Endothelial cell of umbilical vein (primary cell): ENCODE measurements at regions of chr1 and their contacts with region 1.

Region 1: DNA sequence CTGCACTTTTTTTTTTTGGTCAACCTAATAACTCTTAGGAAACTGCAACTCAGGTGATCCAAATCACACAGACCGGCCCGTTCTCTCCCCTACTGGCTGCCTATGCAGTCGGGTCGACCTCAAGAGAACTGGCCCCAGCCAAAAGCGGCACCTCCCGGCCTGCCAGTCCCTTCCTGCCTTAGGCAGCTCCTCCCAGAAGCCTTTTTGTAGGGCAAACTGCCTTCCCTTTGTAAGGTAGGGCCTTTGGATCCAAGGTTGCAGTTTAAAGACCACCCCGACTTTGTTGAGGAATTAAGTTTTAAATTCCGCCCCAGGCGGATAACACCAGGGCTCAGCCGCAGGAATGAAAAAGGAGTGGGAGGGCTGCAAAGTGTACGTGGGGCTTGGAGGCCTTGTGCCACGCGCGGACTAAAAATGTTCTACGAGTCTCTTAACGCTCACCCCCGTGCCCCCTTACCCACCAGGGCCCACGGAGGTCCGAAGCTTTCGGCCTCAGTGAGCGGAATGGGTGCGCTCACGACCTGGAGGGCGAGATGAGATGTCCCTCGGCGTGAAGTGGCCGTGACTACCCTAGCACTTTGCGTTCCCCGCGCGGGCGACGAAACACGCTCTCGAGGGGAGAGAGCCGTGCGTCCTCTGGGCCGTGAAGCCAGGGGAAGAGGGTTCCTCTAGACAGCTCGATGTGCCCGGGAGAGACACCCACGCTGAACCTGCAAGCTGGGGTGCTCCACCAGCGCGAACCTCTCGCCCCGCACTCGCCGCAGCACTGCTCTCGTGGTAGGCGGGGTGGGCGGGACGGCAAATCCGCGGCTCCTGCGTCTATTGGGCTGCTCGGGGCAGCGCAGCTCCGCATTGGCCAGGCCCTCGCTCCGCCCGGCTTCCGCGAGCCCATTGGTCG is 489 bp upstream of the ST3GAL3 start:
- DNase-seq: peak; percentile 92
- H3K4me3 ChIP-seq: peak overlapping the region in 2 of 3 experiments; percentile 36 to 56
- H3K27ac ChIP-seq: no peak overlapping the region
- H3K4me1 ChIP-seq: peaks cover 36% of the 10 kb centered on the region
- H3K27me3 ChIP-seq: no peaks in the 10 kb centered on the region
- CTCF ChIP-seq: no peak
- POLR2A ChIP-seq: peak; percentile 93

Region 2: DNA sequence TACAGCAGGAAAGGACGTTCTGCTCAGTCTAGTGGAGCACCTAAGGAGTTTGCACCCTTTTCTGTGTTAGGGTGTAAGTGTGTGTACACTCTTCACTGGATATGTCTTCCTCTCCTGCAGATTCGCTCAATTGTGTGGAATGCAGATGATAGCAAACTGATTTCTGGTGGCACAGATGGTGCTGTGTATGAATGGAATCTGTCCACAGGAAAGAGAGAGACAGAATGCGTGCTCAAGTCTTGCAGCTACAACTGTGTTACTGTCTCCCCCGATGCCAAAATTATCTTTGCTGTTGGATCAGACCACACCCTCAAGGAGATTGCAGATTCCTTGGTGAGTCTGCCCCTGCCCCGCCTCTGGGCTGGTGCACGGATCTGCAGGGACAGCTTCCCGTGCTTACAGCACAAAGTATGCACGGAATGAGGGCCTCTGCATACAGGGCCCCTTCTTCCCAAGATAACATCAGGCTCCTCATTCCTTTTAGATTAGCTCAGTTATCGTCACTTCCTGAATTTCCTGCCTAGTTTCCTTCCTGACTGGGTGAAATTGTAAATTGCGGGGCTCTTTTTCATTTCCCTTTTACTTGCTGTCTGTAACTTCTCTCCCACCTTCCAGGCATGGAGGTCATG is 500.1 kb before region 1 on chr1:
- CTCF ChIA-PET with region 1: no interaction called
- POLR2A ChIA-PET with region 1: no interaction called
- dilution Hi-C with region 1: no loop called
- intact Hi-C with region 1: loop called (anchors 1 kb)
- DNase-seq: no peak
- H3K4me3 ChIP-seq: peak overlapping the region in 1 of 3 experiments; percentile 7
- H3K27ac ChIP-seq: peak overlapping the region; percentile 97
- H3K4me1 ChIP-seq: peaks cover 27% of the 10 kb centered on the region
- H3K27me3 ChIP-seq: no peaks in the 10 kb centered on the region
- CTCF ChIP-seq: no peak
- POLR2A ChIP-seq: peak; percentile 92

Region 3: DNA sequence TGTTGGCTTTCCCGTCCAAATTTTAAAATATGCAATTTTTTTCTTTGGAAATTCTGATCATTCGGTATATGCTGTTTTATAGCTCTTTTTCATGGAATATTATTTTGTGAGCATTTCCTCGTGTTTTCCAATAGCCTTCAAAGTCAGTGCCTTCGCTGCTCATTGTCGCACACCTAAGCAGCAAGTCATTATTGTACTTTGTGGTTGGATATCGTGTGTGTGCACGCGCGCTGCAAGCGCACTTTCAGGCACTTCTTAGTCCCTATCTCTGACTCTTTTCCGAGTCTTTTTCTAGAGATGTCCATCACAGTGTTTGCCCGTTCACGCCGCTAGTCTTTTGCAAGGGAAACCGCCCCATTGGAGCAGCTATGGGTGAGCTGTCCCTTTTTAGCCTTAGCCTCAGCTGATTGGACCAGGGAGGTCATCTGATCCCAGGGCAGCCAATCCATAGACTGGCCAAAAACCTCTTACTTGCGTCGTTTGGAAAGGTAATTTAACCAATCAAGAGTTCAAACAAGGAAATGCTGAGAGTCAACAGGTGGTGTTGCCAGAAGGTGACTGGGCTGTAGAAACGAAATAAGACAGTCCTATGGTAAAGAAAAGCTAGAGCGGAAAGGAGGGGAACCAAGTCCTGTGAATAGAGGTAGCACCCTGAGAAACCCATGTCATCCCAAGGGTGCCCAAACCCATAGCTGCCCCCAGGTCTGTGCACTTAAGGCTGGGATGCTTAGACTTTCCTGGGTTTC is 252.4 kb before region 1 on chr1:
- CTCF ChIA-PET with region 1: no interaction called
- POLR2A ChIA-PET with region 1: no interaction called
- dilution Hi-C with region 1: no loop called
- intact Hi-C with region 1: loop called (anchors 1 kb)
- DNase-seq: peak; percentile 86
- H3K4me3 ChIP-seq: peak overlapping the region; percentile 19 to 72 (median 67)
- H3K27ac ChIP-seq: peak overlapping the region; percentile 55
- H3K4me1 ChIP-seq: peaks cover 43% of the 10 kb centered on the region
- H3K27me3 ChIP-seq: no peaks in the 10 kb centered on the region
- CTCF ChIP-seq: no peak
- POLR2A ChIP-seq: peak; percentile 88

Region 4: GRCh38 chr1:43650310-43651085 is 56.3 kb before region 1 on chr1:
- CTCF ChIA-PET with region 1: interaction called, 3 read pairs
- POLR2A ChIA-PET with region 1: interaction called, 11 read pairs
- dilution Hi-C with region 1: no loop called
- intact Hi-C with region 1: no loop called
- DNase-seq: peak; percentile 94
- H3K4me3 ChIP-seq: peak overlapping the region; percentile 60 to 95 (median 65)
- H3K27ac ChIP-seq: peak overlapping the region; percentile 63
- H3K4me1 ChIP-seq: peaks cover 16% of the 10 kb centered on the region
- H3K27me3 ChIP-seq: peaks cover under 1 to 1% of the 10 kb centered on the region in 2 experiments
- CTCF ChIP-seq: no peak
- POLR2A ChIP-seq: peak; percentile 99

Region 5: DNA sequence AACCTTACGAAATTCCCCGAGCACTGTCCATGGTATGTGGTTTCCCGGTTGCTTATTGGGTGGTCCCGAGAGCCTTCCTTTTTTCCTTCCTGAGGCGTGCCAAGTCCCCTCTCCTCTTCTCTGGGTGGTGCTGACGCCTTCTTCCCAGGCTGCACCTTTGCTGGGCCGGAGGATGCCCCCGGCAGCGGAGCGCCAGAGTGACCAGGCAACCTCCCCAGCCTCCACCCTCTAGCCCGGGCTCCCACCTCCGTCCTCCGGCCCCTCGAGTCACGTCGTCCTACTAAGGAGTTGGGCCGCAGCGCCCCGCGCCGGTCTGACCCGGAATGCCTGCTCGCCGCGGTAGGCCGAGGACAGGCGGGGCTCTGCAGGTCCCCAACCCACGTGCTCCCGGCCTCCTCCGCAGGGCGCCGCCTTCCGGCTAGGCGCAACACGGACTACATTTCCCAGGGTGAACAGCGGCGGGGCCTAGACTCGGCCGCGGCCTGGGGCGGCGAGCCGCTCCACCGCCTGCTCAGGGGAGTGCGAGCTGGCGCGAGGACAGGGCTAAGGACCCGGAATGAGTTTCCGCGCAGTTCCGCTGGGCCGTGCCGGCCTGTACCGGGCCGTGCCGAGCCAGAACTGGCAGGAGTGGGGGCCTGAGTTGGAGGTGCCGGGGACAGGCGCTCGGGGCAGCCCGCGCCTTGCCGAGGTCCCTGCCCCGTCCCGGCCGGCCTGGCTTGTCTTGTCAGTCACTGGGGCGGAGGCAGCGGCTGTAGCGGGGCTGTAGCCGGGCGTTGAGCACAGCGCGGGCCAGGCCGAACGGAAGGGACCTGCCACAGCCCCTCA is 239.6 kb after region 1 on chr1 and contains the start of gene IPO13:
- CTCF ChIA-PET with region 1: no interaction called
- POLR2A ChIA-PET with region 1: no interaction called
- dilution Hi-C with region 1: no loop called
- intact Hi-C with region 1: loop called (anchors 1 kb)
- DNase-seq: peak; percentile 96
- H3K4me3 ChIP-seq: peak within 1 kb of the TSS; percentile 64 to 76 (median 67)
- H3K27ac ChIP-seq: peak within 1 kb of the TSS; percentile 94
- H3K4me1 ChIP-seq: peaks cover 20% of the 10 kb centered on the region
- H3K27me3 ChIP-seq: no peaks in the 10 kb centered on the region
- CTCF ChIP-seq: peak; percentile 65 to 70
- POLR2A ChIP-seq: peak; percentile 86
- total RNA-seq, gene IPO13: 25.8 and 29.3 TPM in 2 replicates

Region 6: DNA sequence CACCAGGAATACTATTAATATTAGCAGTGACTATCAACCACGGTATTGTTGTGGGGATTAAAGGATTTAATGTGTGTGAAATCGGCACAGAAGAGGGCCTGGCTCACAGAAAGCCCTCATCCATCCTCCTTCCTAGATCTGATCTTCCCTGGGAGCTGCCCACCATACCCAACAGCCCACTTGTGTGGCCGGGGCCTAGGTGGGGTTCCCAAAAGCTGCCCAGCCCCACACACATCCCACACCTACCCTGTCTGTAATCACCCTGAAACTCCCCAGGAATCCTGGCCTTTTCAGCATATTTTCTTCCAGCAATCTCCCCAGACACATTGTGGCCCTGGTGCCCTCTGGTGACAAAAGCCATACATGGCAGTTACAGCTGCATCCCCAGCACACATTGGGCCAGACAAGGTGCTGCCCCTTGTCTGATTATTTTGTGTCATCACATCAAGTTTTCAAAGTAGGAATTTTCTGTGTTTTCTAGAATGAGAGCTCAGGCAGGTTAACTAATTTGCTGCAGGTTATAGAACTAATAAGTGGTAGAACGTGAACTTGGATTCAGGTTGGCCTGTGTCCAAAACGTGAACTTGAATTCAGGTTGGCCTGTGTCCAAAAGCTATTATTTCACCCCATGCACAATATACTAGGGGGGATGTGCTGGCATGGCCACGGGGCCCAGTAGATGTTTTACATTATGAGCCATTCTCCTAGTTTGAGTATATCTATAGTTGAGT is 329.7 kb after region 1 on chr1:
- CTCF ChIA-PET with region 1: interaction called, 3 read pairs
- POLR2A ChIA-PET with region 1: no interaction called
- dilution Hi-C with region 1: no loop called
- intact Hi-C with region 1: loop called (anchors 5 kb)
- DNase-seq: peak; percentile 84
- H3K4me3 ChIP-seq: no peak overlapping the region
- H3K27ac ChIP-seq: no peak overlapping the region
- H3K4me1 ChIP-seq: no peaks in the 10 kb centered on the region
- H3K27me3 ChIP-seq: peaks cover 0 to 5% of the 10 kb centered on the region in 2 experiments
- CTCF ChIP-seq: peak; percentile 70 to 78
- POLR2A ChIP-seq: no peak